ENCODE measurements at regions of chr12 and their contacts with region 1.

Region 1: GRCh38 chr12:12376646-12377448 is 20.0 kb downstream of the BORCS5 start:
- DNase-seq: peak in 2 of 5 donors; percentile 73 to 76
- H3K4me3 ChIP-seq: no peak overlapping the region
- H3K4me3 Mint-ChIP-seq: no peak overlapping the region
- H3K27ac ChIP-seq: no peak overlapping the region
- H3K27ac Mint-ChIP-seq: peak overlapping the region in 7 of 8 donors; percentile 59 to 97 (median 88)
- H3K4me1 ChIP-seq: peaks cover 28% of the 10 kb centered on the region
- H3K4me1 Mint-ChIP-seq: peaks cover 40 to 60% (median 51%) of the 10 kb centered on the region in 3 donors
- H3K27me3 ChIP-seq: no peaks in the 10 kb centered on the region
- H3K27me3 Mint-ChIP-seq: no peaks in the 10 kb centered on the region

Region 2: GRCh38 chr12:12387501-12387900 is 10.7 kb after region 1 on chr12:
- CTCF ChIA-PET with region 1: interaction called, 11 read pairs
- POLR2A ChIA-PET with region 1: interaction called, 4 read pairs
- DNase-seq: no peak
- H3K4me3 ChIP-seq: no peak overlapping the region
- H3K4me3 Mint-ChIP-seq: peak overlapping the region in 6 of 7 donors; percentile 9 to 62 (median 34)
- H3K27ac ChIP-seq: no peak overlapping the region
- H3K27ac Mint-ChIP-seq: peak overlapping the region; percentile 71 to 99 (median 93)
- H3K4me1 ChIP-seq: peaks cover 44% of the 10 kb centered on the region
- H3K4me1 Mint-ChIP-seq: peaks cover 52 to 79% (median 75%) of the 10 kb centered on the region in 3 donors
- H3K27me3 ChIP-seq: no peaks in the 10 kb centered on the region
- H3K27me3 Mint-ChIP-seq: no peaks in the 10 kb centered on the region

Region 3: GRCh38 chr12:12474931-12475795 is 98.3 kb after region 1 on chr12:
- CTCF ChIA-PET with region 1: interaction called, 24 read pairs
- POLR2A ChIA-PET with region 1: interaction called, 6 read pairs
- DNase-seq: peak in 4 of 5 donors; percentile 30 to 74 (median 54)
- H3K4me3 ChIP-seq: peak overlapping the region; percentile 5
- H3K4me3 Mint-ChIP-seq: peak overlapping the region; percentile 23 to 82 (median 75)
- H3K27ac ChIP-seq: peak overlapping the region; percentile 71
- H3K27ac Mint-ChIP-seq: peak overlapping the region; percentile 88 to 99 (median 95)
- H3K4me1 ChIP-seq: peaks cover 23% of the 10 kb centered on the region
- H3K4me1 Mint-ChIP-seq: peaks cover 42 to 75% (median 61%) of the 10 kb centered on the region in 3 donors
- H3K27me3 ChIP-seq: no peaks in the 10 kb centered on the region
- H3K27me3 Mint-ChIP-seq: no peaks in the 10 kb centered on the region

Region 4: GRCh38 chr12:12505544-12506495 is 129.0 kb after region 1 on chr12:
- CTCF ChIA-PET with region 1: interaction called, 18 read pairs
- POLR2A ChIA-PET with region 1: interaction called, 3 read pairs
- DNase-seq: no peak
- H3K4me3 ChIP-seq: no peak overlapping the region
- H3K4me3 Mint-ChIP-seq: peak overlapping the region in 5 of 7 donors; percentile 21 to 62 (median 37)
- H3K27ac ChIP-seq: no peak overlapping the region
- H3K27ac Mint-ChIP-seq: peak overlapping the region; percentile 35 to 95 (median 84)
- H3K4me1 ChIP-seq: peaks cover 9% of the 10 kb centered on the region
- H3K4me1 Mint-ChIP-seq: peaks cover 60 to 69% (median 67%) of the 10 kb centered on the region in 3 donors
- H3K27me3 ChIP-seq: no peaks in the 10 kb centered on the region
- H3K27me3 Mint-ChIP-seq: no peaks in the 10 kb centered on the region

Region 5: DNA sequence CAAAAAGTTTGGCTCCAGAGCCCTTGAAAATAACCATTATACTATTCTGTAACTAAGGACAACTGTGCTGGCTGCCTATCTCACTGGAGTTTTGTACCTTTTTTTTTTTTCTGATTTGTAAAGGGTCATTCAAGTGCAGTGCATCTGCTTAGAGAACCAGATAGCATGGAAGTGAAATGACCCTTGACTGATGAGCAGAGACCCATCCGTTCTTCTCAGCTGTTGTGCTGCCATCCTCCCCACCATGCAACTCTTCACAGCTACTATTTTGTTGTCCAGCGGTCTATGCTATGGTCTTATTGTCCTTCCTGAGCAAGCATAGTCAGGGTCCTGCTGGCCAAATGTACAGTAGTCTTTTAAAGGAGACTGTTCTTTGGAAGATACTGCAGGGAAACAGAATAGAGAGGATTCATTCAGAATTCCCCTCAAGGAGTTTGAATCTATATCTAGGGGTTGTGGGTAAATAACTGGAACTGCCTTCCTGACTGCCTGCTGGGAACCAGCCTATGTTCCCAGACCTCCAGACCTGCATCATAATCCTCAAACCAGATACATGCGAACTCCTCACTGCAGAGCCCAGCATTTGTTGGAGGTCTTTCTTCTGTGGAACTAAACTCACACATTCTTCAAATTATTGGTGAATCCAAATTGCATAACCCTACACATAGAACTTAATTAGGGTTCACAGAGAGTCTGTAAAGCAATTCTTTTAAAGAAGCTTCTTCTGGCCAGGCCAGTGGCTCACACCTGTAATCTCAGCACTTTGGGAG is 278.0 kb after region 1 on chr12:
- CTCF ChIA-PET with region 1: interaction called, 15 read pairs
- POLR2A ChIA-PET with region 1: no interaction called
- DNase-seq: no peak
- H3K4me3 ChIP-seq: no peak overlapping the region
- H3K4me3 Mint-ChIP-seq: no peak overlapping the region
- H3K27ac ChIP-seq: no peak overlapping the region
- H3K27ac Mint-ChIP-seq: peak overlapping the region in 1 of 8 donors; percentile 19
- H3K4me1 ChIP-seq: peaks cover 4% of the 10 kb centered on the region
- H3K4me1 Mint-ChIP-seq: peaks cover 9 to 20% (median 19%) of the 10 kb centered on the region in 3 donors
- H3K27me3 ChIP-seq: no peaks in the 10 kb centered on the region
- H3K27me3 Mint-ChIP-seq: no peaks in the 10 kb centered on the region